GM12878 (cell line): ENCODE measurements at regions of chr2 and their contacts with region 1.

Region 1: DNA sequence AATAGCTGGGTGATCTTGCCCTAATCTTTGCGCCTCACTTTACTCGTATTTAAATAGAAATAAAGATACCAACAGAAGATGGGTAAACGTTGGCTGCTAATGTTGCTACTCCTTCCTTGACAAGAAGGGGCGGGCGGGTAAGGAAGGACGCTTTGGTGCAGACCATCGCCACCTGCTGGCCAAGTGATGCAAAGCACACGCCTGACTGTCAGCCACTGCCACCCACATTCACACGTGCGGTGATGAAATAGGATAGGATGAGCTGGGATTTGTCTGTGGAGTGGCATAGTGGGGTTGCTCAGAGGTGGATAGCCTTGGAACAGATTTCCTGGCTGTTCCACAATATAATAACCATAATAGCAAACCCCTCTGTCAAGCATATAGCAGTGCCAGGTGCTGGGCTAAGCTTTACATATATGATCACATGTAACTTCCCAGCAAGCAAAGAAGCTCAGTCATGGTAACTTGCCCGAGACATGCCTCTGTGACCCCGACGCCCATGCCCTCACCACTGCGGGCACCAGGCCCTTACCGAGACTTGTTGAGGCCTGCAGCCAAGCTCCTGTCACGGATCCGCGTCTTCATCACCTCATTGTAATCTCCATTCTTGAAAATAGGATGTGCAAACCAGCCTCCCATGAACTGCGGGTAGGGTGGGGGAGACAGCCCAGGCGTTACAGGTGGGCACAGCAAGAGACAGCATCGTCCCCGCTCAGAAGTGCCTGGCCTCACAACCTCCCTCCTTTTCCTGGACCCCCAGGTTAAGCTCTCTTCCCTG is 39.3 kb downstream of the LCT start:
- DNase-seq: peak; percentile 36
- ATAC-seq: peak; percentile 89
- H3K4me3 ChIP-seq: no peak overlapping the region
- H3K27ac ChIP-seq: no peak overlapping the region
- H3K4me1 ChIP-seq: peaks cover 11% of the 10 kb centered on the region
- H3K27me3 ChIP-seq: no peaks in the 10 kb centered on the region
- CTCF ChIP-seq: peak; percentile 94 to 95 (median 94)
- EP300 ChIP-seq: no peak
- POLR2A ChIP-seq: no peak
- RAD21 ChIP-seq: peak; percentile 52

Region 2: DNA sequence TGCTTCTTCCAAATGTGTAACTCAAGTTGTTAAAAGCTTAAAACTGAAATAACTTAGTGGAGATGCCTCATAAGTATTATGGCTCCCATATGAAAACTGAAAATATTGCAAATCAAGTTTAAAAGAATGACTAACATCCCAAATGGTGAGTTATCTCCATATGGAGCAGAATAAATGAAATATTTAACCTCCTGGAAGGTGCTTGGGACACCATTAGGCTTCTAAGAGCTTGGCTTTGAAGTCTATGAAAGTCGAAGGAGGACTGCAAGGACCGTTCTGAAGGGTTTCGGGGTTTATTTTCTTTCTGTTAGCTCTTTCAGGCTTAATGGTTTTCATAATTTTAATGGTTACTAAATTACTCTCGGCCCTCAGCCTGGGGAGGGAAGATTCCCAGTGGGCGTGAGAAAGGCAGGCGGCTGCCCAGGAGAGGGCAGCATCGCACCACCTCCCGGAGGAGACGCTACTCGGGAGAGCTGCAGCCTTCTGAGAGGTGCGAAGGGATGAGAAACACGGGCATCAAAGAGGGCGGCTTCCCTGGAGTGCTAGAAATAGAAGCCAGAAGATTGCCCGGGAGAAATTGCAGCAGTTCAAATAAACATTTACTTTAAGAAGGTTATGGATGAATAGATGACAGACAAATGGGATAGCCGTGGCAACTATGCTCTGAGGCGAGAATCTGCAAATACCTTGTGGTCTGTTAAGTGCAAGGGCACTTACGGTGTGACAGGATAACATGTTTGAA is 793.5 kb before region 1 on chr2:
- CTCF ChIA-PET with region 1: interaction called, 19 read pairs
- POLR2A ChIA-PET with region 1: no interaction called
- RAD21 ChIA-PET with region 1: interaction called, 16 read pairs
- SMC1A ChIA-PET with region 1: interaction called, 20 read pairs
- in situ Hi-C with region 1: no loop called
- intact Hi-C with region 1: loop called (anchors 5 kb)
- DNase-seq: peak; percentile 17
- ATAC-seq: peak; percentile 100
- H3K4me3 ChIP-seq: no peak overlapping the region
- H3K27ac ChIP-seq: no peak overlapping the region
- H3K4me1 ChIP-seq: no peaks in the 10 kb centered on the region
- H3K27me3 ChIP-seq: peaks cover 0 to 2% of the 10 kb centered on the region in 2 experiments; a peak in 1 of 4 replicates
- CTCF ChIP-seq: peak; percentile 94 to 98 (median 96); a peak in 5 of 6 replicates
- EP300 ChIP-seq: no peak
- POLR2A ChIP-seq: no peak
- RAD21 ChIP-seq: peak; percentile 95

Region 3: GRCh38 chr2:135709992-135710391 is 87.7 kb before region 1 on chr2:
- CTCF ChIA-PET with region 1: interaction called, 18 read pairs
- POLR2A ChIA-PET with region 1: no interaction called
- RAD21 ChIA-PET with region 1: no interaction called
- SMC1A ChIA-PET with region 1: interaction called, 6 read pairs
- in situ Hi-C with region 1: no loop called
- intact Hi-C with region 1: no loop called
- DNase-seq: no peak
- ATAC-seq: peak; percentile 89
- H3K4me3 ChIP-seq: no peak overlapping the region
- H3K27ac ChIP-seq: no peak overlapping the region
- H3K4me1 ChIP-seq: no peaks in the 10 kb centered on the region
- H3K27me3 ChIP-seq: no peaks in the 10 kb centered on the region
- CTCF ChIP-seq: peak; percentile 87 to 89 (median 89)
- EP300 ChIP-seq: no peak
- POLR2A ChIP-seq: no peak
- RAD21 ChIP-seq: peak; percentile 95

Region 4: DNA sequence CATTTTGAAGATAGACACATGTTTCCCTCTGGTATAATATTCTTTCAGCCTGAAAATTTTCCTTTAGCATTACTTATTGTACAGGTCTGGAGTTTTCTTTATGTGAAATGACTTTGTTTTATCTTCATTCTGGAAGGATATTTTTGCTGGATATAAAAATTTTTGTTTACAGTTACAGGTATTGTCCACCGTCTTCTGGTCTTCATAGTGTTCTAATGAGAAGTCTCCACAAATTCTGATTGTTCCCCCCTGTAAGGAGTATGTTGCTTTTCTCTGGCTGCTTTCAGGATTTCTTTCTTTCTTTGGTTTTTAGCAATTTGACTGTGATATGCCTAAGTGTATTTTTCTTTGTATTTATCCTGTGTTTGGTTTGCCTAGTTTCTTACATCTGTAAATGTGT is 41.0 kb before region 1 on chr2:
- CTCF ChIA-PET with region 1: interaction called, 14 read pairs
- POLR2A ChIA-PET with region 1: no interaction called
- RAD21 ChIA-PET with region 1: interaction called, 3 read pairs
- SMC1A ChIA-PET with region 1: interaction called, 5 read pairs
- in situ Hi-C with region 1: no loop called
- intact Hi-C with region 1: no loop called
- DNase-seq: no peak
- ATAC-seq: no peak
- H3K4me3 ChIP-seq: no peak overlapping the region
- H3K27ac ChIP-seq: no peak overlapping the region
- H3K4me1 ChIP-seq: no peaks in the 10 kb centered on the region
- H3K27me3 ChIP-seq: no peaks in the 10 kb centered on the region
- CTCF ChIP-seq: no peak
- EP300 ChIP-seq: no peak
- POLR2A ChIP-seq: no peak
- RAD21 ChIP-seq: no peak

Region 5: DNA sequence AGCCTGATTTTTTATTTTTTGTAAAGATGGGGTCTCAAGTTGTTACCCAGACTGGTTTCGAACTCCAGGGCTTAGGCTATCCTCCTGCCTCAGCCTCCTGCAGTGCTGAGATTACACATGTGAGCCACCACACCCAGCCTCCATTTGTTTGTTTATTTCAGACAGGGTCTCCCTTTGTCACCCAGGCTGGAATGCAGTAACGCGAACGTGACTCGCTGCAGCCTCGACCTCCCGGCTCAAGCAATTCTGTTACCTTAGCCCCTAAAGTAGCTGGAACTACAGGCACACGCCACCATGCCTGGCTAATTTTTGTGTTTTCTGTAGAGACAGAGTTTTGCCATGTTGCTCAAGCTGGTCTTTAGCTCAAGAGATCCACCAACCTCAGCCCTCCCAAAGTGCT is 28.8 kb before region 1 on chr2:
- CTCF ChIA-PET with region 1: interaction called, 13 read pairs
- POLR2A ChIA-PET with region 1: interaction called, 8 read pairs
- RAD21 ChIA-PET with region 1: no interaction called
- SMC1A ChIA-PET with region 1: interaction called, 3 read pairs
- in situ Hi-C with region 1: no loop called
- intact Hi-C with region 1: no loop called
- DNase-seq: no peak
- ATAC-seq: no peak
- H3K4me3 ChIP-seq: no peak overlapping the region
- H3K27ac ChIP-seq: no peak overlapping the region
- H3K4me1 ChIP-seq: no peaks in the 10 kb centered on the region
- H3K27me3 ChIP-seq: no peaks in the 10 kb centered on the region
- CTCF ChIP-seq: no peak
- EP300 ChIP-seq: no peak
- POLR2A ChIP-seq: no peak
- RAD21 ChIP-seq: no peak

Region 6: GRCh38 chr2:135820003-135820618 is 22.4 kb after region 1 on chr2:
- CTCF ChIA-PET with region 1: interaction called, 19 read pairs
- POLR2A ChIA-PET with region 1: interaction called, 3 read pairs
- RAD21 ChIA-PET with region 1: interaction called, 3 read pairs
- SMC1A ChIA-PET with region 1: interaction called, 4 read pairs
- in situ Hi-C with region 1: no loop called
- intact Hi-C with region 1: no loop called
- DNase-seq: peak; percentile 48
- ATAC-seq: peak; percentile 91
- H3K4me3 ChIP-seq: peak overlapping the region; percentile 63
- H3K27ac ChIP-seq: peak overlapping the region; percentile 93
- H3K4me1 ChIP-seq: peaks cover 37% of the 10 kb centered on the region
- H3K27me3 ChIP-seq: no peaks in the 10 kb centered on the region
- CTCF ChIP-seq: no peak
- EP300 ChIP-seq: 0 out of 4 replicates have a peak, but pooled peaks of 1 of the 2 experiments have one; percentile 18
- POLR2A ChIP-seq: peak; percentile 67
- RAD21 ChIP-seq: 0 out of 2 replicates have a peak, but pooled peaks have one; percentile 18